ENCODE measurements at regions of chr20 and their contacts with region 1.

Region 1: DNA sequence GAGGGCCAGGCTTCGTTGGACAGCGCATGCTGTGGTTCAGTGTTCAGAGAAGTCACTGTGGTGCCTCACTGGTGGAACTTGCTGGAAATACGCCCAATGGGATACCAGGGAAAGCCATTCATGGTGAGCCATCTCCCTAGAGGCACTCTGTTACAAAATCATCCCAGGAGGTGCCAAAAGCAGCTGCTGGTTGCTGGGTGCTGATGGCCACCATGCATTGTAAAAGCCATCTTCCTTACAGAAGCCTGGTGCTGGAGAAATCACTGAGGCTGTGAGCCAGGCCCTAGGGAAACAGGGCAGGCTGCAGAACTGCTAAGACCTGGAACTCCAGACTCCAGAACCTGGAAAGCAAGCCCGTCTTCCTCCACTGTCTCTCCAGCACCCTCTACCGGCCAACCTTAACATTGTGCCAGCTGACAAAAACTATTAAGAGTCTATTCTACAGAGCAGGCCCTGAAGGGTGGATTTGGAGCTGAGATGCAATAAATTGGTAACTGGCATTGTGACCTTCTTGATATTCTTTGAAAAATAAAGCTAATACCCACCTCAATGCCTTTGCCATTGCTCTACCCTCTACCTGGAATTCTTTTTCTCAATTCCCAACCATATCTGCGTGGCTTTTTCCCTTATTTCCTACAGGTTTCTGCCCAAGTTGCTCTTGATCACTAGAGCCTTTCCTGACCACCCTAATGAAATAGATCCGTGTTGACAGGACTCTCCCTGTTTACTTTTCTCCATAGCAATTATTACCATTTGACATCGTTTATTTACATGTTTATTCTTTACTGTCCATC is 18.5 kb downstream of the SNRPB start:
- DNase-seq: peak; percentile 81 to 87
- H3K4me3 ChIP-seq: no peak overlapping the region
- H3K4me3 Mint-ChIP-seq: no peak overlapping the region
- H3K27ac Mint-ChIP-seq: no peak overlapping the region
- H3K4me1 ChIP-seq: no peaks in the 10 kb centered on the region
- H3K4me1 Mint-ChIP-seq: no peaks in the 10 kb centered on the region
- H3K27me3 ChIP-seq: no peaks in the 10 kb centered on the region
- H3K27me3 Mint-ChIP-seq: peaks cover 8% of the 10 kb centered on the region
- CTCF ChIP-seq: peak; percentile 87 to 89

Region 2: DNA sequence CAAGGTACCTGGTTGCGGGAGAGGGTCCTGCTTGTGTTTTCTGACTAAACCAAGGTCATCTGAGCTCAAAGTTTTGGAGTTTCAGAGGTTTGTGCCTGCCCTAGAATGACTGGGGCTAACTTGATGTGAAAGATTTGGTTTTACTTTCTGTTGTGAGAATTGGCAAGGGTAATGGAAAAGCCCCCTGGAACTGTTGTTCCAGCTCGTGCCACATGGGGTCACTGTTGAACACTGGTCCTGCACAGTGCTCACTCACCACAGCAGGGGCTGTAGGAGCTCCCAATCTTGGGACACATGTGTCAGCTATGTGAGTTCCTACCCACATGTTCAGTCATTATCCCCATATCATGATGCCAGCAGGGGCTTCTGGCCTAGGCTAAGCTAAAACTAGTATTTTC is 65.0 kb before region 1 on chr20:
- CTCF ChIA-PET with region 1: interaction called, 11 read pairs
- POLR2A ChIA-PET with region 1: no interaction called
- intact Hi-C with region 1: loop called (anchors 1 kb)
- DNase-seq: peak; percentile 57 to 67
- H3K4me3 ChIP-seq: no peak overlapping the region
- H3K4me3 Mint-ChIP-seq: no peak overlapping the region
- H3K27ac Mint-ChIP-seq: no peak overlapping the region
- H3K4me1 ChIP-seq: no peaks in the 10 kb centered on the region
- H3K4me1 Mint-ChIP-seq: no peaks in the 10 kb centered on the region
- H3K27me3 ChIP-seq: no peaks in the 10 kb centered on the region; the same call in none of the 2 replicates
- H3K27me3 Mint-ChIP-seq: peaks cover 7% of the 10 kb centered on the region
- CTCF ChIP-seq: peak; percentile 61 to 75

Region 3: GRCh38 chr20:2421247-2421646 is 30.9 kb before region 1 on chr20:
- CTCF ChIA-PET with region 1: no interaction called
- POLR2A ChIA-PET with region 1: no interaction called
- intact Hi-C with region 1: loop called (anchors 1 kb)
- DNase-seq: no peak
- H3K4me3 ChIP-seq: no peak overlapping the region
- H3K4me3 Mint-ChIP-seq: no peak overlapping the region
- H3K27ac Mint-ChIP-seq: no peak overlapping the region
- H3K4me1 ChIP-seq: no peaks in the 10 kb centered on the region
- H3K4me1 Mint-ChIP-seq: no peaks in the 10 kb centered on the region
- H3K27me3 ChIP-seq: no peaks in the 10 kb centered on the region
- H3K27me3 Mint-ChIP-seq: peaks cover 21% of the 10 kb centered on the region
- CTCF ChIP-seq: peak in 1 of 2 experiments; percentile 14

Region 4: GRCh38 chr20:2470423-2471193 is 18.5 kb after region 1 on chr20 and contains the start of gene SNRPB:
- CTCF ChIA-PET with region 1: interaction called, 3 read pairs
- POLR2A ChIA-PET with region 1: interaction called, 13 read pairs
- intact Hi-C with region 1: no loop called
- DNase-seq: peak; percentile 98
- H3K4me3 ChIP-seq: peak within 1 kb of the TSS; percentile 73
- H3K4me3 Mint-ChIP-seq: peak within 1 kb of the TSS; percentile 79
- H3K27ac Mint-ChIP-seq: peak within 1 kb of the TSS; percentile 99
- H3K4me1 ChIP-seq: peaks cover 11% of the 10 kb centered on the region
- H3K4me1 Mint-ChIP-seq: peaks cover 14% of the 10 kb centered on the region
- H3K27me3 ChIP-seq: no peaks in the 10 kb centered on the region
- H3K27me3 Mint-ChIP-seq: no peaks in the 10 kb centered on the region
- CTCF ChIP-seq: no peak
- total RNA-seq, gene SNRPB: 532 and 533 TPM in 2 replicates

Region 5: DNA sequence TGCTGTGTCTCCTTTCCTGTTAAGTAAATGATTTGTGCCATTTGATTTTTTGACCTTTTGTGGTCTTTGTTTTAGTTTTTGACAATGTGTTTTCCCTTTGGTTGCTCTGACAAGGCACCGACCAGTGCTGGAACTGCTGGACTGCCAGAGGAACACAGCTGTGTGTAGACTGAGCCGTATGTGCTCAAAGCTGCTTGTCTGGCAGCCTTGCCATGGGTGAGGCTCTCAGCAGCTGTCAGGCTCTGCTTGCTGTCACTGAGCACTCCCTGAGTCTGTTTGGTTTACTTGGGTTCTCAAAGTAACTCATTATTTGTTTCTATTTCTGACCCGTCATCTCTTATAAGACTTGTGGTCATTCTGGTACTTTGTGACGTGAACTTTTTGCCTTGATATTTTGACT is 33.5 kb after region 1 on chr20:
- CTCF ChIA-PET with region 1: no interaction called
- POLR2A ChIA-PET with region 1: no interaction called
- intact Hi-C with region 1: no loop called
- DNase-seq: no peak
- H3K4me3 ChIP-seq: no peak overlapping the region
- H3K4me3 Mint-ChIP-seq: no peak overlapping the region
- H3K27ac Mint-ChIP-seq: no peak overlapping the region
- H3K4me1 ChIP-seq: no peaks in the 10 kb centered on the region
- H3K4me1 Mint-ChIP-seq: no peaks in the 10 kb centered on the region
- H3K27me3 ChIP-seq: no peaks in the 10 kb centered on the region
- H3K27me3 Mint-ChIP-seq: no peaks in the 10 kb centered on the region
- CTCF ChIP-seq: no peak